Heart left ventricle (tissue), 16 donors: ENCODE measurements at regions of chr13 and their contacts with region 1.

Region 1: GRCh38 chr13:23510979-23511735 is 59.1 kb upstream of the TNFRSF19 start:
- DNase-seq: peak in 1 of 5 donors; percentile 13
- ATAC-seq: peak; percentile 4 to 42 (median 24)
- H3K4me3 ChIP-seq: no peak overlapping the region
- H3K27ac ChIP-seq: peak overlapping the region in 8 of 12 donors; percentile 14 to 78 (median 40)
- H3K4me1 ChIP-seq: peaks cover 0 to 48% (median 19%) of the 10 kb centered on the region in 12 donors
- H3K27me3 ChIP-seq: no peaks in the 10 kb centered on the region
- CTCF ChIP-seq: peak in 9 of 12 donors; percentile 15 to 56 (median 44)
- POLR2A ChIP-seq: no peak

Region 2: DNA sequence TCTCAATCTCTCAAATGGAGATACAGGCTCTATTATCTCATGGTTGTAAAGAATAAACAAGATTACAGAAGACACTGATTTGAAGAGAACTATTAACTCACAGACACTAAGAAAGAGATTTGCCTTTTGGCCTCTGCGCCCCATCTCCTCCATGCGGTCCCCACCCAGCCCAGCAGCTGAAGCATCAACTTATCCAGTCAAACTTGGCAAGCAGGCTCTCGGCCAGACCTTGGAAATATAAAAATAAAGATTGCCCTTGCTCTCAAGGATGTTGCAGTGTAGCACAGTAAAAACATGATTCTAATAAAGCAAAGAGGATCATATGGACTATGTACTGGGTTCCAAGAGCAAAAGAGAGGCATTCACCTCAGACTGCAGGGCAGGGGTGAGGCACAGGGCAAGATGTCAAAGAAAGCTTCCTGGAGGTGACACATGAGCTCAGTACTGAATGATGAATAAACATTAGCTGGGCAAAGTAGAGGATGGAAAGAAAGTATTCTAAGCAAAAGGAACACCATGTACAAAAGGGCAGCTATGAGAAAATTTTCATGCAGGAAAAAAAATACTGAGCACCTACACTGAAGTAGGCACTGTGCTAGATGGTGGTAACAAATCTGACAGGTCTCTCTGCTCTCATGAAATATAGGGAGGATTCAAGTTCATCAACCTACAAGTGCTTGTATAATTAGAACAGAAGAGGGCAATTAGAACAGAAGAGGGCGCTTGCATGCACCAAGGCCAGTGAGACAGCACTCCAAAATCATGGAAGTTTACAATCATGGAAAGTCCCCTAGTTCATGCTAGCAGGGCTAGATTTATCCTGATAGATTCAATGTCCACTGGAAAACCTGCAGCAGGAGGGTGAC is 162.7 kb before region 1 on chr13:
- intact Hi-C with region 1: no loop called
- DNase-seq: no peak
- ATAC-seq: peak; percentile 10 to 74 (median 52)
- H3K4me3 ChIP-seq: no peak overlapping the region
- H3K27ac ChIP-seq: no peak overlapping the region
- H3K4me1 ChIP-seq: peaks cover 0 to 29% (median 2%) of the 10 kb centered on the region in 12 donors
- H3K27me3 ChIP-seq: no peaks in the 10 kb centered on the region
- CTCF ChIP-seq: peak in 4 of 12 donors; percentile 6 to 25 (median 14)
- POLR2A ChIP-seq: no peak

Region 3: DNA sequence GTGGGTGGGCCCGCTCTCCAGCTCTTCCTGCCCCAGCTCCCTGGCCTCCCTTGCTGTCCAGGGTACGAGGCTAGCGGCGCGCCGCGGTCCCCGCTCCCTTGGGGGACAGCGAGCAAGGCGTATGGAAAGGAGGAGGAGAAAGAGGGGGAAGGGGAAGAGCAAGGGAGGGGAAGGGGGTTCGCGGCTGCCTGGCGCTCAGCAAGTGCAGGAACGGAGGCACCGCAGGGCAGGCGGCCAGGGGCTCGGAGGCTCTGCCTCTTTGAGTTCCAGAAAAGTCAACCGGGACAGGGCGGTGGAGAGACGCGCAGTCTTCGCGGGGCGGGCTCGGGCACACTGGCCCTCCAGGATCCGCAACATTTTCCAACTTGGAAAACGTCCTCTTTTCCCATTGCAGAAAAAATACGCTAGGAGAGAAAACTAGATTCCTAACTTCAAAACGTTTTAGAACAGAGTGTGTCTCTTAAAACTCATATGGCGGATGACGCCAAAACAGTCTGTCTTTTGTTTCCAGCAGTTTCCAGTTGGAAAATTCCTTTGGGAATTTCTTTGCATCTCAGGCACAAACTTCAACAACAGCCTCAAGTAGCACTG is 35.9 kb after region 1 on chr13:
- intact Hi-C with region 1: loop called in 5 of 10 experiments (anchors 5 kb)
- DNase-seq: peak; percentile 58 to 81 (median 77)
- ATAC-seq: peak; percentile 61 to 85 (median 79)
- H3K4me3 ChIP-seq: peak overlapping the region; percentile 6 to 63 (median 54)
- H3K27ac ChIP-seq: peak overlapping the region; percentile 62 to 88 (median 77)
- H3K4me1 ChIP-seq: peaks cover 0 to 29% (median 7%) of the 10 kb centered on the region in 12 donors
- H3K27me3 ChIP-seq: no peaks in the 10 kb centered on the region
- CTCF ChIP-seq: no peak
- POLR2A ChIP-seq: no peak

Region 4: GRCh38 chr13:23554000-23554399 is 42.8 kb after region 1 on chr13:
- intact Hi-C with region 1: loop called in 5 of 10 experiments (anchors 5 kb)
- DNase-seq: peak in 1 of 5 donors; percentile 51
- ATAC-seq: peak in 2 of 4 donors; percentile 16 to 19
- H3K4me3 ChIP-seq: no peak overlapping the region
- H3K27ac ChIP-seq: no peak overlapping the region
- H3K4me1 ChIP-seq: peaks cover 0 to 41% (median 13%) of the 10 kb centered on the region in 12 donors
- H3K27me3 ChIP-seq: no peaks in the 10 kb centered on the region
- CTCF ChIP-seq: no peak
- POLR2A ChIP-seq: no peak

Region 5: DNA sequence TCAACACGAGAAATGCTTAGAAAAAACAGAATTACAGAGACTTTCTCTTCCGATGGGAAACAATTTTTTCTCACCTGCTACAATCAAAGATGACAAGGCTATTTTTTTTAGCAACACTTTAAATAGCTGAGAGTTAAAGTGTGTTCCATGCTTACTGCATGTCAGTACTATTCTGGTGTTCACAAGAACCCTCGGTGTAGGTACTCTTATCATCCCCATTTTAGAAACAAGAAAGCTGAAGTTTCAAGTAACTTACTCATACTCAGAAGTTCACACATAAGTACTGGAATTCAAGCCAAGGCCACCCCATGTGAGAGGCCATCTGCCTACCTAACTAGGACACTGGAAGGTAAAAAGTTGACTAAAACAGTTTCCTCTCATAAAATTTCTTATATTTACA is 50.1 kb after region 1 on chr13:
- intact Hi-C with region 1: loop called in 7 of 10 experiments (anchors 2 to 5 kb)
- DNase-seq: no peak
- ATAC-seq: peak in 3 of 4 donors; percentile 39 to 54 (median 54)
- H3K4me3 ChIP-seq: no peak overlapping the region
- H3K27ac ChIP-seq: peak overlapping the region; percentile 15 to 93 (median 84)
- H3K4me1 ChIP-seq: peaks cover 0 to 37% (median 9%) of the 10 kb centered on the region in 12 donors
- H3K27me3 ChIP-seq: no peaks in the 10 kb centered on the region
- CTCF ChIP-seq: no peak
- POLR2A ChIP-seq: no peak

Region 6: GRCh38 chr13:23570099-23570920 is 59.2 kb after region 1 on chr13 and contains the start of gene TNFRSF19:
- intact Hi-C with region 1: loop called in 8 of 10 experiments (anchors 2 to 5 kb)
- DNase-seq: peak in 4 of 5 donors; percentile 62 to 84 (median 70)
- ATAC-seq: peak; percentile 68 to 93 (median 86)
- H3K4me3 ChIP-seq: peak within 1 kb of the TSS; percentile 18 to 63 (median 54)
- H3K27ac ChIP-seq: peak within 1 kb of the TSS; percentile 58 to 86 (median 73)
- H3K4me1 ChIP-seq: peaks cover 0 to 19% (median 0%) of the 10 kb centered on the region in 12 donors
- H3K27me3 ChIP-seq: no peaks in the 10 kb centered on the region
- CTCF ChIP-seq: no peak
- POLR2A ChIP-seq: no peak
- total RNA-seq, gene TNFRSF19: 12.0 to 35.7 (median 28.0) TPM